PC-3 (cell line): ENCODE measurements at regions of chr1 and their contacts with region 1.

Region 1: GRCh38 chr1:22704440-22705067 is 6.1 kb upstream of the EPHB2 start:
- DNase-seq: peak; percentile 90
- ATAC-seq: peak; percentile 99
- H3K4me3 ChIP-seq: no peak overlapping the region
- H3K27ac ChIP-seq: no peak overlapping the region
- H3K4me1 ChIP-seq: peaks cover 10% of the 10 kb centered on the region; the same call in 1 of the 2 replicates
- H3K27me3 ChIP-seq: no peaks in the 10 kb centered on the region
- CTCF ChIP-seq: peak; percentile 85

Region 2: DNA sequence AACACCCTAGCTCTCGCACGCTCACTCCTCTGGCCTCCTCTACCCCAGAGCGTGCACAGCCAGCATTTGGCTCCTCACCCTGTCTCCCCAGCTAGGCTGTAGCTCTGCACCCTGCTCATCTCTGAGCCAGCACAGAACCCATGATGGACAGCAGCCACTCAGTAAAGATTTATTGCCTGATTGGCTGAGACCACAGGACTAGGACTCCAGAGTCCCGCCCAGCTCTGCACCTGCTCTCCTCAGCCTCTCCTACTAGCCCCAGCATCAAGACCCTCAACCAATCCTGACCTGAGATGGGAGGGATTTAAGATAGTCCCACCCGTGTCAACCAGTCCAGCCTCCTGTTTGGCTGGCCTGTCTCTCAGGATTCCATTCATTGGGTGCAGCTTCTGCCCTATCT is 42.2 kb before region 1 on chr1:
- CTCF ChIA-PET with region 1: no interaction called
- POLR2A ChIA-PET with region 1: no interaction called
- intact Hi-C with region 1: no loop called
- DNase-seq: peak; percentile 28
- ATAC-seq: peak; percentile 22; the same call in 1 of the 2 replicates
- H3K4me3 ChIP-seq: no peak overlapping the region
- H3K27ac ChIP-seq: no peak overlapping the region
- H3K4me1 ChIP-seq: no peaks in the 10 kb centered on the region
- H3K27me3 ChIP-seq: peaks cover 9% of the 10 kb centered on the region; the same call in 1 of the 2 replicates
- CTCF ChIP-seq: no peak

Region 3: GRCh38 chr1:22673486-22674409 is 30.8 kb before region 1 on chr1:
- CTCF ChIA-PET with region 1: interaction called, 4 read pairs
- POLR2A ChIA-PET with region 1: no interaction called
- intact Hi-C with region 1: loop called (anchors 1 kb)
- DNase-seq: peak; percentile 74
- ATAC-seq: peak; percentile 76
- H3K4me3 ChIP-seq: no peak overlapping the region
- H3K27ac ChIP-seq: no peak overlapping the region
- H3K4me1 ChIP-seq: no peaks in the 10 kb centered on the region
- H3K27me3 ChIP-seq: no peaks in the 10 kb centered on the region
- CTCF ChIP-seq: peak; percentile 88

Region 4: DNA sequence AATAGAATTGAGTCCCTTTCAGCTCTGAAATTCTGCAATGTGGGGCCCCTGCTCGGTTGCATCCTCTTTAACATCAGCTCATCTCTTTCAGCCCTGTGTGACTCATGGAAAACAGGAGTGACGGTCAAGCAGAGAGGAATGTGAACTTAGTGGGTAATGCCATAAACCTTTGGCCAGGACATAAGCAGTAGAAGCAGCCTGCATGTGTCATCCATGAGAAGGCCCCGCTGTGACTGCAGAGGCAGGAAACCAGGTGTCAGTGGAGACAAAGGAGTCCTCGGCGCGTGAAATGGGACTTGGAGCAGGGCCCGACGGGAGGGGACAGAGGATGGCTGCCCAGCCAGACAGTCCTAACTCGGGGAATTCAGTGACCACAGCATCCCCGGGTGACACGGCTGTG is 15.0 kb before region 1 on chr1:
- CTCF ChIA-PET with region 1: interaction called, 10 read pairs
- POLR2A ChIA-PET with region 1: no interaction called
- intact Hi-C with region 1: no loop called
- DNase-seq: peak; percentile 96
- ATAC-seq: peak; percentile 99
- H3K4me3 ChIP-seq: no peak overlapping the region
- H3K27ac ChIP-seq: peak overlapping the region; percentile 17
- H3K4me1 ChIP-seq: peaks cover 14% of the 10 kb centered on the region
- H3K27me3 ChIP-seq: no peaks in the 10 kb centered on the region
- CTCF ChIP-seq: no peak

Region 5: GRCh38 chr1:22776035-22776613 is 71.6 kb after region 1 on chr1:
- CTCF ChIA-PET with region 1: interaction called, 15 read pairs
- POLR2A ChIA-PET with region 1: no interaction called
- intact Hi-C with region 1: loop called (anchors 1 kb)
- DNase-seq: peak; percentile 30
- ATAC-seq: peak; percentile 83
- H3K4me3 ChIP-seq: no peak overlapping the region
- H3K27ac ChIP-seq: no peak overlapping the region
- H3K4me1 ChIP-seq: peaks cover 3% of the 10 kb centered on the region; the same call in 1 of the 2 replicates
- H3K27me3 ChIP-seq: no peaks in the 10 kb centered on the region
- CTCF ChIP-seq: 0 out of 2 replicates have a peak, but pooled peaks have one; percentile 31

Region 6: DNA sequence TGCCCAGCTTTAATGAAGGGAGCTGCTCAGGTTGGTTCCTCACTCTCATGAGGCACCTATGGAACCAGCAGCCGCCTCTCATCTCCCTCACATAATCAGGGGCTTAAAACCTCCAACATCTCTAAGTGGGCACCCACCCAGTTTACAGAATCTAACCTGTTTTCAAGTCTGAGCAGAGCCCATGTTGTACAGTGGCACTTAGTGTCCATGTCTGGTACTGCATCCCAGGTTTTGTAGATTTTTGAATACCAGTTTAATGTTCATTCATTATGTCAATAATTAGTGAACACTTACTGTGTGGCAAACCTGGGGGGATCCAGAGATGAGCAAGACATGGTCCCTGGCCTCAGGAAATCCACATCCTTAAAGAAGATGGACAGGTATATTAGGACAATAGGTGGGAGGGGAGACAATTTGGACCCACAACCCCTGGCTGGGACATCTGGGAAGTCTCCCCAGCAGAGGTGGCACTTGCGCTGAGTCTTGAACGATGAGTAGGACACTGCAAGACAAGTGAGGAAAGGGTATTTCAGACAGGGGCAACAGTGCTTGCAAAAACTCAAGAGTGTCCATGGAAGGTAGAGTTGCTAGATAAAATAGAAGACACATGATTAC is 184.8 kb after region 1 on chr1:
- CTCF ChIA-PET with region 1: interaction called, 21 read pairs
- POLR2A ChIA-PET with region 1: no interaction called
- intact Hi-C with region 1: loop called (anchors 1 kb)
- DNase-seq: peak; percentile 66
- ATAC-seq: peak; percentile 78
- H3K4me3 ChIP-seq: no peak overlapping the region
- H3K27ac ChIP-seq: no peak overlapping the region
- H3K4me1 ChIP-seq: peaks cover 7% of the 10 kb centered on the region; the same call in 1 of the 2 replicates
- H3K27me3 ChIP-seq: no peaks in the 10 kb centered on the region
- CTCF ChIP-seq: peak; percentile 95

Region 7: GRCh38 chr1:22930235-22930912 is 225.8 kb after region 1 on chr1:
- CTCF ChIA-PET with region 1: no interaction called
- POLR2A ChIA-PET with region 1: no interaction called
- intact Hi-C with region 1: loop called (anchors 1 kb)
- DNase-seq: peak; percentile 64
- ATAC-seq: peak; percentile 84
- H3K4me3 ChIP-seq: no peak overlapping the region
- H3K27ac ChIP-seq: no peak overlapping the region
- H3K4me1 ChIP-seq: no peaks in the 10 kb centered on the region
- H3K27me3 ChIP-seq: no peaks in the 10 kb centered on the region
- CTCF ChIP-seq: peak; percentile 86